Right ventricle myocardium inferior (tissue), 1 donor: ENCODE measurements at regions of chr18 and their contacts with region 1.

Region 1: DNA sequence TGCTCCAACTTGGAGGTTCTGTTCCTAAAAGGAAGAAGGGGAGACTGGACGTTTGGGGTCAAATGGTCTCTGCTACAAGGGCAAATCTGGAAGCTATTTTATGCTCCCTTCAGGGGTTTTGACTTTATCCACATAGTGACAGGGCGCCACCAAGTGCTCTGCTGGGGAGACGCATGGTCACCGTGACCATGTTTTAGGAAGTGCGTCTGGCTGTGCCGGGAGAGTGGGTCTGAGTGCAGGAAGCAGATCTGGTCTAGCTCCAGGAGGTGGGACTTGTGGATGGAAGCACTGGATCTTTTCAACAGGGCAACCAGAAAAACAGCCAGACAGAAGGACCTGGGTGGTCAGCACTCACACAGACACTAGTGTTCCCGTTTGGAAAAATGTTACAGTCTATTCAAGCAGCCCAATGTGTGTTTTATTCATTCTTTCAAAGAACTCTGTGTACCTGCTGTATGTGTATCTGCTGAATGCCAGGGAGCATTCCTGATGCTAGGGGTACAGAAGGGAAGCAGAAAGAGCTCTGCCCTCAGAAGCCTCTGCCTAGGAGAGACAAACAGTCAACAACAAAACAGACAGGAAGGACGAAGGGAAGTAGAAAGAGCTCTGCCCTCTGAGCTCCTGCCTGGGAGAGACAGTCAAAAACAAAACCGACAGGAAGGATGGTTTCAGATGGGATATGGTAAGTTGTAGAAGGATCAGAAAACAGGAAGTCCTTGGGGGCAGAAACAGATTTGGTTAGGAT is 14.3 kb downstream of the IMPA2 start:
- DNase-seq: peak; percentile 88
- ATAC-seq: peak; percentile 85

Region 2: GRCh38 chr18:11826836-11827235 is 168.8 kb before region 1 on chr18:
- intact Hi-C with region 1: no loop called
- DNase-seq: no peak
- ATAC-seq: no peak

Region 3: GRCh38 chr18:11937874-11938478 is 57.6 kb before region 1 on chr18:
- intact Hi-C with region 1: loop called (anchors 1 kb)
- DNase-seq: peak; percentile 80
- ATAC-seq: peak; percentile 82

Region 4: DNA sequence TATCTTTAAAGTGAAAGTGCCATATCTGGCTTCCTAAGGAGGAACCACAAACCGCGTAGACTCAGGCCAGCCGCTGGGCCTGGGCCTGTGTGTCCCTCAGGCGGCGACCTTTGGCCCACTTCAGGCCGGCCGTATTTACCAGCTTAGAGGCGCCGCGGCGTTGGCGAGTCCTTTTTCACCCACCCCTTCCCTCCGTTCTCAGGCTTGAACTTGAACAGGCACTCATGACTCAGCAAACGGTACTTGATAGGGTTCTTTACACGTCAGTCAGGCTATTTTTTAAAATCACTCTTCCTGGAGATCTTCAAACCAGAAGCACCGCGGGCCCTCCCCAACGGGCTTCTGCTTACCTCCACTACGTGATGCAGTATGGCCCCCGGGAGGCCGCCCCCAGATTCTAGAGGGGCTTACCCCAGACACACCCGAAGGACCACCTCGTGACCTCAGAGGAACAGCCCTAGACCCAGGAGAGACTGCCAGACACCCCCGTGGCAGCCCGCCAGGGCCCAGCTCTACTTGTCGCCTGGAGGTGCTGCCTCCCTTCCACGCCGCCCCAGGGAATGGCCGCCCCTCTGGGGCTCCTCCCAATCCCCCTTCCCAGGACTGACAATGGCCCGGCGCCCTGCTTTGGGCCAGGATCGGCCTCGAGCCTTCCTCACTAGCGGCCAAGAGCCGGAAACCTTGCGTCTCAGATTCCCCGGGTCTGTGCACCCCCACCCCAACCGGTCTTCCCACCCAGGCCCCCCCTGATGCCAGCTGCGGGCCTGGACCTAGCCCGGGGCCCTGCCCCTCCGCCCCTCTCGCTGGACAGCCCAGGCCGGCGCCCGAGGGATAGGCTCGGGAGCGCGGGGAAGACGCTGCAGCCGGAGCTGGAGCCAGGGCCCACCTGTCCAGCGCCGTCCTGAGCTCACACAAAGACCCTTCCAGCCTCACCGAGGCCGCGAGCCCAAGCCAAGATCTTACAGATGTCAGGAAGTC is 48.1 kb before region 1 on chr18:
- intact Hi-C with region 1: loop called (anchors 2 kb)
- DNase-seq: peak; percentile 98
- ATAC-seq: peak; percentile 98

Region 5: DNA sequence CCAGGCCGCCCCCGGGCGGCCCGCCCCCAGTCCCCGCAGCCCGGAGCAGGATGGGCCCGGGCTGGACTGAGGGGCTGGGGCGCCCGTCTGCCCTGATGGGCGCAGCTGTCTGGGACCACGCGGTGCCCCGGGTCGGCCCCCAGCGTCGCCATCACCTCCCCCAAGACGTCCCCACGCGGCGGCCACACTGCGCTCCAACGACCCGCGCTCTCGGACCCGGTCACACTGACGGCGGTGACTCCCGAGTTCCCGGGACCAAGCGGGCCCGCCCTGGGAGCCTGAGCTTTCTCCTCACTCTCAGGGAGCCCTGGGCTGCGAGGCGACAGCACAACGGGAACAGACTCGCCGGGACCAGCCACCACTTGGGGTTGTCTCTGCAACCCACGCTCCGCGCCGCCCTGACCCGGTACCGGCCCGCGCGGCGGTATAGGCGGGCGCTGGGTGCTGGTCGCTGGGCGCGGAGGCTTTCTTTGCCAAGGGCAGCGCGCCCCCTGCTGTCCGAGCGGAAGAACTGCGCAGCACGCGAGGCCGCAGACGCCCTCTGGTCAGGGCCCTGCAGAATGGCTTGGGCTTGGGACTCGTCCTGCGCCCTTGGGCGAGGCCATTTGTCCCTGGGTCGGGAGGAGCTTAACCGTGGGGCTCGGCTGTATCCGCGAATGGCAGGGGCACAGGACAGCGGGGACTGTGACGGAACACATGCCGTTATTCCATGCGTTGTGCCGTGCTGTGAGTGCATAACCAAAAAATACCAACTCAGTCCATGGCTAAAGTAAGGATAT is 43.2 kb after region 1 on chr18:
- intact Hi-C with region 1: loop called (anchors 2 kb)
- DNase-seq: peak; percentile 92
- ATAC-seq: peak; percentile 97

Region 6: GRCh38 chr18:12076424-12077140 is 81.0 kb after region 1 on chr18:
- intact Hi-C with region 1: no loop called
- DNase-seq: no peak
- ATAC-seq: peak; percentile 72